Caco-2 (cell line): ENCODE measurements at regions of chr12 and their contacts with region 1.

Region 1: DNA sequence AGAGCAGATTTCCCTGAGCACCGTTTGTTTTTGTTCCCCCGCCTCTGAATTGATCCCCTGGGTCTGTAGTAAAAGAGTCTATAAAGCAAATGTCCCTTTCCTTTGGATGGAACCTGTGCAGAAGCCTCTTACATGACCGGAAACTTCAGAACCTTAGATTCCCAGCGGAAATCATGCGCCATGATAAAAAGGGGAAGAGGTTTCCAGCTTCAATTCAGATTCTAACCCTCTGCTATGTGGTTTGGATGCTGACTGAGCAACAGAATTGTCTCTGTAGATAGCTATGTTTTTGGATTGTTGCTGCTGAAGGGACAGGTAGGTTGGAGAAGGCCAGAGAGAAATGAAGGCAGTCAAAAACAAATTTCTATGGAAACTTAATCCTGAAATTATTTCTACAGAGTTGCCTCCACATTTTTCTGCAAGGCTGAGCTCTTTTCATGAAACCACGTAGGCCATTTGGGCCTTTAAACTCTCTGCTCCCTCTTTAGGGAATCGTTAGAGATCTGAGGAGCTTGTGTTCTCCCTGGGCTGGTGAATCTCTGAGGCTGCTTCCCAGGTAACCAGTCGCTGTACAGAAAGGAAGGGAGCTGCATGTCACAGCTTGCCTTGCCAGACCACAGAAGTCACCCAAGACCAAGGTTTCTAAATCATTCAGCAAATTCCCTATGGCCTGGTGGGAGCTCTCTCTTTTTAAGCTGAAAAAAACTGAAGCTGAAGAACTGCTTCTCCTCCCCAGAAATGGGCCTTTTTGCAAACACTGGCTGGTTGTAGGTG is 28.7 kb upstream of the OR10P1 start:
- DNase-seq: no peak
- H3K4me3 ChIP-seq: no peak overlapping the region
- H3K4me3 Mint-ChIP-seq: no peak overlapping the region
- H3K27ac Mint-ChIP-seq: no peak overlapping the region
- H3K4me1 ChIP-seq: no peaks in the 10 kb centered on the region; the same call in 1 of the 2 replicates
- H3K4me1 Mint-ChIP-seq: peaks cover 7% of the 10 kb centered on the region
- H3K27me3 ChIP-seq: no peaks in the 10 kb centered on the region
- H3K27me3 Mint-ChIP-seq: no peaks in the 10 kb centered on the region
- CTCF ChIP-seq: no peak

Region 2: DNA sequence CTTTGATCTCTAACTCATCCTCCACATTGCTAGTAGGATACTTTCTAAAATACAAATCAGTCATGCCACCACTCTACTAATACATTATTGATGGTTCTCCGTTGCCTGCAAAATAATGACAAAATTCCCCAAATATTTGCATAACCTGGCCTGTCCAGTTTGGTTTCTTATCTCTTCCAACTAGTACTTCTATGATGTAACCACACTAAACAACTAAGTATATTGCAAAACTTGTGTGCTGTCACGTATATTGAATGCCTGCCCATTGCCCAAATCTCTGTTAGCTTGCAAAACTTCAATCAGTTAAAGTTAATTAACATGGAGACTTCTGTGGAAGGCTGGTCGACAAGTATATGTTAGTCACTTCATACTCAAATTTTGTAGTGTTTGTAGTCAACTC is 357.1 kb before region 1 on chr12:
- CTCF ChIA-PET with region 1: no interaction called
- POLR2A ChIA-PET with region 1: no interaction called
- intact Hi-C with region 1: no loop called
- DNase-seq: peak in 1 of 2 experiments; percentile 21
- H3K4me3 ChIP-seq: no peak overlapping the region
- H3K4me3 Mint-ChIP-seq: no peak overlapping the region
- H3K27ac Mint-ChIP-seq: no peak overlapping the region
- H3K4me1 ChIP-seq: no peaks in the 10 kb centered on the region
- H3K4me1 Mint-ChIP-seq: peaks cover 7% of the 10 kb centered on the region
- H3K27me3 ChIP-seq: no peaks in the 10 kb centered on the region
- H3K27me3 Mint-ChIP-seq: peaks cover 9% of the 10 kb centered on the region
- CTCF ChIP-seq: no peak

Region 3: DNA sequence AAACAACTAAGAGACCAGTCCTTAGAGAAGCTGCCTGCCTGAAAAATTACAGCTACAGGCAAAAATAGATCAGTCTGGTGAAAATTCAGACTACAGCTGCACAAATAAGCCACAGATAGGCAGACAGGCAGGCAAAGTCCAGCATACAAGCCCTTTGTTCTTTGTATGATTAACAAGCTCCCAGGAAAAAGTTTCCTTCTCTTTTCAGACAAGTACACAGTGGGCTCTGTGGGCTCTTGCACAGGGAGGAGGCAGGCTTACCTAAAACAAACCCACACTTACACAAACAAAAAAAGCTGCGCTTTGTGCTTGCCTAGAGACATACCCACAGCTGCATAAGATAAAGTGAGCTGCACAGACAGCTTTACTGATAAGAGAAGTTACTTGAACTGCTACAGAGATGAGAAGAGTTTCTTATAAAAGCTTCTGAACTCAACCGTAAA is 108.2 kb before region 1 on chr12:
- CTCF ChIA-PET with region 1: no interaction called
- POLR2A ChIA-PET with region 1: no interaction called
- intact Hi-C with region 1: loop called (anchors 1 kb)
- DNase-seq: peak; percentile 82 to 88
- H3K4me3 ChIP-seq: no peak overlapping the region
- H3K4me3 Mint-ChIP-seq: peak overlapping the region; percentile 41
- H3K27ac Mint-ChIP-seq: peak overlapping the region; percentile 83
- H3K4me1 ChIP-seq: peaks cover 44% of the 10 kb centered on the region
- H3K4me1 Mint-ChIP-seq: peaks cover 26% of the 10 kb centered on the region
- H3K27me3 ChIP-seq: no peaks in the 10 kb centered on the region
- H3K27me3 Mint-ChIP-seq: no peaks in the 10 kb centered on the region
- CTCF ChIP-seq: no peak